ENCODE measurements at regions of chr1 and their contacts with region 1.

Region 1: GRCh38 chr1:37807555-37808368 is at the starts of genes C1orf122 and YRDC:
- DNase-seq: peak; percentile 96
- H3K4me3 ChIP-seq: peak within 1 kb of the TSS; percentile 85 to 98 (median 90)
- H3K27ac ChIP-seq: peak within 1 kb of the TSS; percentile 95 to 97 (median 97)
- H3K4me1 ChIP-seq: peaks cover 12 to 34% (median 20%) of the 10 kb centered on the region in 4 donors
- H3K27me3 ChIP-seq: no peaks in the 10 kb centered on the region
- CTCF ChIP-seq: no peak
- EP300 ChIP-seq: no peak
- POLR2A ChIP-seq: peak; percentile 82
- total RNA-seq, gene C1orf122: 48.9 to 71.6 (median 55.2) TPM
- total RNA-seq, gene YRDC: 3.4 to 17.2 (median 11.6) TPM

Region 2: DNA sequence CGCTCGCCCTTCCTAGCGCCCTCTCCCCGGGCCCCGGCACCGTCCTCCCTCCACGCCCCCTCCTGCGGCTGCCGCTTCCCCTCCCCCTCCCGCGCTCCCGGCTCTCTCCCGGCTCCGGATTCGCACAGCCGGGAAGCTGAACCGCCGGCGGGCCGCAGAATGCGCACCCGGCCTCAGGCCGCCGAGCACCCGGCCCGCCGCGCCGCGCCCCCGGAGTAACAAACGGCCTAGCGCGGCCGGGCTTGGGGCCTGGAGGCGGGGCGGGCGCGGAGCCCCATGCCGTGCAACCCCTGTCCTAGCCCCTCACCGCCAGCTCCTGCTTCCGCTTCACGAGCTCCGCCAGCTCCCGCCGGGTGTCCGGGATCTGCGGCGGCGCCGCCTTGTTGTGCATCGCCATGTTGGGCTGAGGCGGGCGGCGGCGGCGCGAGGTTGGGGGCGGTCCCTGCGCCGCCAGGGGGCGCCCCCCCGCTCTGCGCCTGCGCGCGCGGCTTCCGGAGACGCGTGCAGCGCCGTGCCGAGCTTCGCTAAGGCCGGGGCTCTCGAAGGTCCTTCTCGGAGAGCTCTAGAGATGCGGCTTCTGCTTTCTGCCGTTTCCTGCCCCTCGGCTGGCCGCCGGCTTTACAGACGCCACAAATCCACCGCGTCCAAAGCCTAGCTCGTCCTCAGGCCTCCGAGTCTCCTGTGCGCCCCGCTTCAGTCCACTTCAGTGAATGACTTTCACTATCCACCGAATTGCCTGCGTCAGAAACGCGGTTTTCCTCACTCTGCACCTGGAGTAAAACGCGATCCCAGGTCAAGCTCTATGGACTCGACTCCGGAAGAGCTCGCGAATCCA is 293.2 kb before region 1 on chr1 and contains the start of gene MEAF6:
- in situ Hi-C with region 1: no loop called
- intact Hi-C with region 1: loop called (anchors 5 kb)
- DNase-seq: peak; percentile 86
- H3K4me3 ChIP-seq: peak within 1 kb of the TSS; percentile 73 to 96 (median 92)
- H3K27ac ChIP-seq: peak within 1 kb of the TSS; percentile 95 to 98 (median 98)
- H3K4me1 ChIP-seq: peaks cover 10 to 26% (median 13%) of the 10 kb centered on the region in 4 donors
- H3K27me3 ChIP-seq: no peaks in the 10 kb centered on the region
- CTCF ChIP-seq: peak in 4 of 5 experiments; percentile 61 to 89 (median 70)
- EP300 ChIP-seq: no peak
- POLR2A ChIP-seq: peak; percentile 79
- total RNA-seq, gene MEAF6: 8.2 to 51.9 (median 32.9) TPM

Region 3: GRCh38 chr1:37622131-37622530 is 185.6 kb before region 1 on chr1:
- in situ Hi-C with region 1: no loop called
- intact Hi-C with region 1: no loop called
- DNase-seq: no peak
- H3K4me3 ChIP-seq: no peak overlapping the region
- H3K27ac ChIP-seq: no peak overlapping the region
- H3K4me1 ChIP-seq: no peaks in the 10 kb centered on the region
- H3K27me3 ChIP-seq: peaks cover 42% of the 10 kb centered on the region
- CTCF ChIP-seq: no peak
- EP300 ChIP-seq: no peak
- POLR2A ChIP-seq: no peak

Region 4: DNA sequence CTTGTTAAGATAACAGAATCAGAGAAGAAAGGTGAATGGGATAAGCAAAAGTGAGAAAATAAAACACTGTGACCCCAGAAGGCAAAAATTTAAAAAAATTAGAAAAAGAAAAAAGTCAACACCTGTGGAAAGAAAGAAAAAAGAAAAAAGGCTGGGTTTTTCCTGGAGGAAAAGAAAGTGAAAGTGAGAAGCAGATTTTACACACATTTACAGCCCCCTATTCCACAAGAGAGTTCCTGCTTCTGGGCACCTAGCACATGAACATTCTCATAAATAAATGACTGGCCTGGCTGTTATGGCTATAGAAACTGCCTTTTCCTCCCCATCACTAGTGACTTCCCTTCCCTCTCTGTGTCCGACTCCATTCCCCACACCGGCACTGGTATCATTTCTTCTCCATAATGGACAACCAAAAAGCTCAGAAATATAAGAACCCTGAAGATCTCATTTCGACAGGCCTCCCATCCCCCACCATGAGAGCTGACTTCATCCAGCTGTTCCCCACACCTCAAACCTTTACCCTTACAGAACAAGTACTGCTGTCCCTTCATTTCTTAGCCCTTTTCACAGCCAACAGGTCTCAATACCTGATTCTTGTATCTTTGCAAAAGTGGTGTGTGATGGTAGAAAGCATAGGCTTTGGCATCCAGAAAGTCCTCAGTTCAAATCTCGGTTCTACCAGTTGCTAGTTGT is 39.0 kb after region 1 on chr1:
- in situ Hi-C with region 1: no loop called
- intact Hi-C with region 1: no loop called
- DNase-seq: no peak
- H3K4me3 ChIP-seq: peak overlapping the region in 1 of 4 donors; percentile 14
- H3K27ac ChIP-seq: peak overlapping the region; percentile 57 to 73 (median 60)
- H3K4me1 ChIP-seq: peaks cover 3 to 51% (median 16%) of the 10 kb centered on the region in 4 donors
- H3K27me3 ChIP-seq: no peaks in the 10 kb centered on the region
- CTCF ChIP-seq: no peak
- EP300 ChIP-seq: no peak
- POLR2A ChIP-seq: no peak

Region 5: GRCh38 chr1:37859507-37860345 is 52.0 kb after region 1 on chr1 and contains the start of gene MTF1:
- in situ Hi-C with region 1: loop called in 1 of 4 experiments (anchors 5 kb)
- intact Hi-C with region 1: no loop called
- DNase-seq: peak; percentile 98
- H3K4me3 ChIP-seq: peak within 1 kb of the TSS; percentile 75 to 99 (median 87)
- H3K27ac ChIP-seq: peak within 1 kb of the TSS; percentile 92 to 98 (median 96)
- H3K4me1 ChIP-seq: peaks cover 11 to 46% (median 19%) of the 10 kb centered on the region in 4 donors
- H3K27me3 ChIP-seq: no peaks in the 10 kb centered on the region
- CTCF ChIP-seq: peak; percentile 92 to 96 (median 95)
- EP300 ChIP-seq: no peak
- POLR2A ChIP-seq: peak; percentile 81
- total RNA-seq, gene MTF1: 2.2 to 20.2 (median 9.3) TPM

Region 6: DNA sequence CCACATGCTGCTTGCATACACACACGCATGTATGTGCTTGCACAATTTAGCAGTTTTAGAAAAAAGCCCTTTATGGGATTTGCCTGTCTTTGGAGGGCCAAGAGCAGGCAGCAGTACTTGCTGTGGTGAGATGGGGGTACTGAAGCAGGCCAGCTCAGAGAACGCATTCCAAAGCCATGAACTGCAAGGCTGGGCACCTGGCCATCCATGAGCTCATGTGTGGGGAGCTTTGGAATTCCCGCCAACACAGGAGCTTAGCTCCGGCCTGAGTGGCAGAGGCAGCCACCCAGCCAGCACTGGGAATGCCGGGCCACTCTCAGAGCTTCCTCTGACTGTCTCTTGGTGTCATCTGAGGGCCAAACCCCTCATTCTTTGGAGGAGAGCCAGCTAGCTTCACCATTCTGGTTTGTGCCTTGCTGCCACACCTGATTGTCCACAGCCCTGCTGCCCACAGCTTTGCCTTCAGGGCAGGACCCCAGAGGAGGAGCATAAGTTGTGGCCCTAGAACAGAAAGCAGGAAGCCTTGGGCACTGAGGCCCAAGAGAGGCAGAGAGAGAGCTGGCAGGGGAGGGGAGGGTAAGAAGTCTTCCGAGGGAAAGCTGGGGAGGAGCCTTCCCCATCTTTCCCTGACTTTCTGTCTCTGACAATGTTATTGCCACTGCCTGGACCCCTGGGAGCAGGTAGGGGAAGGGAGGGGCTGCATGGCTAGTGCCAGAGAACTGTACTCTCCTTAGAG is 330.9 kb after region 1 on chr1:
- in situ Hi-C with region 1: no loop called
- intact Hi-C with region 1: no loop called
- DNase-seq: peak; percentile 57
- H3K4me3 ChIP-seq: no peak overlapping the region
- H3K27ac ChIP-seq: peak overlapping the region in 2 of 4 donors; percentile 48 to 60
- H3K4me1 ChIP-seq: peaks cover 0 to 15% (median 5%) of the 10 kb centered on the region in 4 donors
- H3K27me3 ChIP-seq: peaks cover 69% of the 10 kb centered on the region
- CTCF ChIP-seq: peak in 2 of 5 experiments; percentile 12 to 32
- EP300 ChIP-seq: no peak
- POLR2A ChIP-seq: no peak

Measured in transverse colon (tissue), 4 donors.